A549 (cell line): ENCODE measurements at regions of chr6 and their contacts with region 1.

Region 1: GRCh38 chr6:146990821-146991798 is 213.1 kb upstream of the STXBP5 start:
- DNase-seq: peak; percentile 13 to 82
- ATAC-seq: peak; percentile 92 to 93
- H3K4me3 ChIP-seq: no peak overlapping the region
- H3K27ac ChIP-seq: peak overlapping the region; percentile 91 to 93
- H3K4me1 ChIP-seq: peaks cover 36% of the 10 kb centered on the region
- CTCF ChIP-seq: no peak
- EP300 ChIP-seq: peak; percentile 88 to 95; a peak in 4 of 5 replicates
- POLR2A ChIP-seq: no peak
- RAD21 ChIP-seq: peak in 1 of 2 experiments; percentile 46; a peak in 2 of 5 replicates

Region 2: DNA sequence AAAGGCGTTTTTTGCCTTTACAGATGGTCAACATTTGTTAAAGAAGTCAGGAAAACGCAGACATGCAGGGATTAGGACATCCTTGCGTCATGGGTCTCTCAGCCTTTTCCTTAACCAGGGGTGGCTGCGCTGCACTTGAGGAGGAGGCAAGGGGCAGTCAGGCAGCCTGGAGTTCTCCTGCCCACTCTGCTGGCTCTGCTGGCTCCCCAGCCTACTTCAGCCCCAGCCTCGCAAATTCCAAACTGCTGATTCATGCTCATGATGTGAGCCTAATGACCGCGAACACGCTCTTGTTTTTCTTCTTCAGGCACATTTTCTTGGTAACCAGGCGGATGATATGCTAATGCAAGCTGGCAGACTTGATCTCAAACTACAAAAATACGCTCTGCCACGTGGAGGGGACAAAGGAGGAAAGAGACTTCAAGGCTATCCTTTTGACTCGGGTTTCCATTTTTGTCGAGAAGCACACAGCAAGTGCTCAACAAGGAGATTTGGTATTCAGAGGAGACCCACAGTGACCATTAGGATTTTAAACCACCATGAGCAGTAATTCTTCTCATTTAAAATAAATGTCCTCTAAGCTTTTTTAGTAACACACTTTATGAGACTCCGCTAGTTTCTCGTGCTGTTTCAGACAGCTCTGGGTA is 77.1 kb before region 1 on chr6:
- CTCF ChIA-PET with region 1: interaction called, 3 read pairs
- POLR2A ChIA-PET with region 1: interaction called, 10 read pairs
- DNase-seq: peak; percentile 52 to 90
- ATAC-seq: peak; percentile 94 to 95
- H3K4me3 ChIP-seq: peak overlapping the region; percentile 36
- H3K27ac ChIP-seq: peak overlapping the region; percentile 96 to 100
- H3K4me1 ChIP-seq: peaks cover 46% of the 10 kb centered on the region
- CTCF ChIP-seq: no peak
- EP300 ChIP-seq: peak in 1 of 2 experiments; percentile 32; a peak in 2 of 5 replicates
- POLR2A ChIP-seq: peak; percentile 32
- RAD21 ChIP-seq: peak in 1 of 2 experiments; percentile 12; a peak in 2 of 5 replicates

Region 3: DNA sequence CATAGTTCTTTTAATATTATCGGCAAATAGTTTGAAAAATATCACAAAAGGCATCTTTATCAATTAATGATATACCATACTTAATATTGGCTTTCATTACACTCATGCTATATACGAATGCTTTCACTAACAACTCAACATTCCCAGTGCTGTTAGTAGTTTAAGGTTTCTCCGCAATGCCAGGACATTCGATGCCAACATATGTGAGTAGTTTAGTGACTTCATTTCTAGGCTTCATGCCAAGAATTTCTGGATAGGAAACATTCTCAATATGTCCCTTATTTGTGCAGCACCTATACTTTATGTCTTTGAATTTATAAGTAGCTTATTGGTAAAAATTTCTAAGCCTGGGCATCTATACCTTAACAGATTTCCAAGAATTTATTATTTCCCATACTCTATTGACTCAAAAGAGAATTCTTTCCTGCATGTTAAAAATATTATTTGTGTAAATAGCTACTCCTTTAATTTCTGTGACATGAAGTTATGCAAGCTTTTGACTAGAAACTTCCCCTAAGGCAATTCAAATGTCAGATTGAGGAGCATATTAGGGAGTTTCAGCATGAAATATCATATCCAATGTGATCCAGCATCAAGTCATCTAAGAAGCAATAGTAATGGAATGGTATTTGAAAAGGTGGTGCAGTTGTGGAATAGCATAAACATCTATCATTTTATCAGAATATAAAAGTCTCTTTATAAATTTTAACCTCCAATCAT is 22.9 kb before region 1 on chr6:
- CTCF ChIA-PET with region 1: no interaction called
- POLR2A ChIA-PET with region 1: no interaction called
- DNase-seq: peak in 1 of 2 experiments; percentile 4
- ATAC-seq: no peak
- H3K4me3 ChIP-seq: no peak overlapping the region
- H3K27ac ChIP-seq: no peak overlapping the region
- H3K4me1 ChIP-seq: no peaks in the 10 kb centered on the region
- CTCF ChIP-seq: no peak
- EP300 ChIP-seq: no peak
- POLR2A ChIP-seq: no peak
- RAD21 ChIP-seq: no peak

Region 4: GRCh38 chr6:147166360-147166944 is 175.3 kb after region 1 on chr6:
- CTCF ChIA-PET with region 1: no interaction called
- POLR2A ChIA-PET with region 1: no interaction called
- DNase-seq: no peak
- ATAC-seq: no peak
- H3K4me3 ChIP-seq: no peak overlapping the region
- H3K27ac ChIP-seq: no peak overlapping the region
- H3K4me1 ChIP-seq: peaks cover 27% of the 10 kb centered on the region; the same call in 2 of the 3 replicates
- CTCF ChIP-seq: no peak
- EP300 ChIP-seq: no peak
- POLR2A ChIP-seq: no peak
- RAD21 ChIP-seq: no peak

Region 5: DNA sequence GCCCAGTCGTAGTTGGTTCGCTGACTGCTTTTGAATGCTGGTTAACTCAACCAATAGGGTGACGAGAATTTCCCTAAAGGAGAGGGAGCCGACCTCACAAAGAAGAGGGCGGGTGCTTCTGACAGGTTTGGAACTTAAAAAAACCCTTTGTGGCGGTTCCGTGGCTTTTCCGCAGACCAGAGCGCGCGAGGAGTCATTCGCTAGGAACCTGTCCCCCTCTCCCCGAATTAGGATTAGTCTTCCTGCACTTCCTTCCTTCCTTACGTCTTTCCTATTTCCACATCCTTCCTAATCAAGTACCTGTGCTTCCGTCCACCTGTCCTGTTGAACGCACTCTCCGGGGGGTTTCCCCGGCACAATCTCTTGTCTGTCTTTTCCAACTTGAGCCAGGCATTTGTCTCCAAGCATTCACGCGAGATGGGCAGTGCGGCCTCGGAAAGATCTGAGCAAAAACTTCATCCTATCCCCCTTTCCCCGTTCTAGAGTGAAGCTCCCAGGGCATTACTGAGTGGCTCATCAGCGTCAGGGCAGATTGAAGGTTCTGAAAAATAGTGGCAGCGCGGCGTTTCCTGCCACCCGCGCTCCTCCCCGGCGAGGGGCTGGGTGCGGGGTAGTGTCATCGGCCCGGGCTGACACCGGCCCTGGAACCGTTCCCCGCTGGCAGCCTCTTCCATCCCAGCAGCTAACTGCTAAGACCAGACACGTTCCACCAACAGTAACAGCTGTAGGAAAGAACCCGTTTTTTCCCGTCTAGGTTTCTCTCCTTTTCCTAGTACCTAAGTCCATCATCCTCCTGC is 211.6 kb after region 1 on chr6:
- CTCF ChIA-PET with region 1: no interaction called
- POLR2A ChIA-PET with region 1: interaction called, 10 read pairs
- DNase-seq: peak; percentile 89 to 94
- ATAC-seq: peak; percentile 90 to 96
- H3K4me3 ChIP-seq: peak overlapping the region; percentile 84
- H3K27ac ChIP-seq: peak overlapping the region; percentile 95 to 100
- H3K4me1 ChIP-seq: peaks cover 15% of the 10 kb centered on the region; the same call in 2 of the 3 replicates
- CTCF ChIP-seq: no peak
- EP300 ChIP-seq: no peak
- POLR2A ChIP-seq: peak; percentile 37
- RAD21 ChIP-seq: no peak